Activated CD4-positive, alpha-beta memory T cell treated with anti-CD3 and anti-CD28 coated beads, Interleukin-2, amount 10 ng/mL, durations not matched to agents 7 days and 5 days (primary cell): ENCODE measurements at regions of chr1 and their contacts with region 1.

Region 1: GRCh38 chr1:51878616-51879336 is at the start of gene NRDC:
- DNase-seq: peak; percentile 100
- H3K4me3 Mint-ChIP-seq: no peak within 1 kb of the TSS
- H3K27ac Mint-ChIP-seq: no peak within 1 kb of the TSS
- H3K4me1 Mint-ChIP-seq: peaks cover 28% of the 10 kb centered on the region
- H3K27me3 Mint-ChIP-seq: peaks cover 17% of the 10 kb centered on the region
- total RNA-seq, gene NRDC: 162 to 164 TPM

Region 2: GRCh38 chr1:52033190-52034049 is 154.6 kb after region 1 on chr1 and contains the start of gene KTI12:
- CTCF ChIA-PET with region 1: no interaction called
- POLR2A ChIA-PET with region 1: interaction called, 10 read pairs
- DNase-seq: peak; percentile 91
- H3K4me3 Mint-ChIP-seq: peak within 1 kb of the TSS; percentile 89
- H3K27ac Mint-ChIP-seq: peak within 1 kb of the TSS; percentile 90
- H3K4me1 Mint-ChIP-seq: peaks cover 34% of the 10 kb centered on the region
- H3K27me3 Mint-ChIP-seq: no peaks in the 10 kb centered on the region
- total RNA-seq, gene KTI12: 11.3 to 11.5 TPM